CD8-positive, alpha-beta T cell (primary cell): ENCODE measurements at regions of chr7 and their contacts with region 1.

Region 1: GRCh38 chr7:93231799-93232672 is at the start of gene VPS50:
- DNase-seq: peak; percentile 82 to 97 (median 91)
- ATAC-seq: peak; percentile 95
- H3K4me3 ChIP-seq: peak within 1 kb of the TSS; percentile 88 to 92
- H3K4me3 Mint-ChIP-seq: peak within 1 kb of the TSS; percentile 96
- H3K27ac ChIP-seq: peak within 1 kb of the TSS; percentile 89 to 90
- H3K27ac Mint-ChIP-seq: peak within 1 kb of the TSS; percentile 99
- H3K4me1 ChIP-seq: peaks cover 25% of the 10 kb centered on the region
- H3K4me1 Mint-ChIP-seq: peaks cover 19% of the 10 kb centered on the region
- H3K27me3 ChIP-seq: no peaks in the 10 kb centered on the region
- H3K27me3 Mint-ChIP-seq: no peaks in the 10 kb centered on the region
- CTCF ChIP-seq: no peak
- total RNA-seq, gene VPS50: 17.1 to 20.2 TPM

Region 2: DNA sequence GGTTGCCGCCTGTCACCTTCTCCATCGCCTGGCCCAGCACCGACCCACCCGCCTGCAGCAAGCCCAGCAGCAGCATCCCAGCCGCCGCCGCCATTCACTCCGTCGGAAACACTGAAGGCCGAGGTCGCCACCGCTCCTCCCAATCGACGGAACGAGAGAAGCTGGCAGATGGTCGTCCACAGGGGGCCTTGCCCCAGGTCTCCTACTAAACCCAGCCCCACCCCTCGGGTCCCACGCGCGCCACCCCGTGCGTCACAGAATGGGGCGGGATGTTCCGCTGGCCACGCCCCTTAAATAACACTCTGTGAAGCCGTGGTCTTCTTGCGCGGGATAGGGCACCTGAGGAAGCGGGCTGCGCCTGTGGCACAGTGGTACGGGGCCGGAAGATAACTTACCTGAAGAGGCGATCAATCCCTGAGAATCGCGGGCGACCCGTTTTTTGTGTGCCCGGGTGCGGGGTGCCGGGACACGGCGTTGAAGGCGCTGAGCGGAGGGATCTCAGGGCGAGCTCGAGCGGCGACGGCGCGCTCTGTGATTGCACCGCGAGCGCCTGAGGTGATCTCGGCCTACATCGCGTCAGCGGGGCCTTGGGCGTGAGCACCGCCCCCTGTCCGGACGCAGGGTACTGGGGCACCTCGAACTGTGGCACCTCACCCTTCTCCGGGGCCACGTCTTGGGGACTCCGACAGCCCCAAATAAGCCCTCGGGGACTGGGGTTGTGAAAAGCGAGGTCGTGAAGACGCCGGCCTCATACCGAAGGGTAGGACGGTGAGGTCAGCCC is 1097.6 kb before region 1 on chr7 and contains the start of gene CYP51A1:
- CTCF ChIA-PET with region 1: no interaction called
- POLR2A ChIA-PET with region 1: no interaction called
- intact Hi-C with region 1: loop called (anchors 5 kb)
- DNase-seq: peak; percentile 87 to 97 (median 94)
- ATAC-seq: peak; percentile 86
- H3K4me3 ChIP-seq: peak within 1 kb of the TSS; percentile 72 to 94
- H3K4me3 Mint-ChIP-seq: peak within 1 kb of the TSS; percentile 100
- H3K27ac ChIP-seq: peak within 1 kb of the TSS; percentile 88 to 93
- H3K27ac Mint-ChIP-seq: peak within 1 kb of the TSS; percentile 100
- H3K4me1 ChIP-seq: peaks cover 11% of the 10 kb centered on the region
- H3K4me1 Mint-ChIP-seq: peaks cover 32% of the 10 kb centered on the region
- H3K27me3 ChIP-seq: no peaks in the 10 kb centered on the region
- H3K27me3 Mint-ChIP-seq: no peaks in the 10 kb centered on the region
- CTCF ChIP-seq: no peak
- total RNA-seq, gene CYP51A1: 44.3 to 44.4 TPM

Region 3: DNA sequence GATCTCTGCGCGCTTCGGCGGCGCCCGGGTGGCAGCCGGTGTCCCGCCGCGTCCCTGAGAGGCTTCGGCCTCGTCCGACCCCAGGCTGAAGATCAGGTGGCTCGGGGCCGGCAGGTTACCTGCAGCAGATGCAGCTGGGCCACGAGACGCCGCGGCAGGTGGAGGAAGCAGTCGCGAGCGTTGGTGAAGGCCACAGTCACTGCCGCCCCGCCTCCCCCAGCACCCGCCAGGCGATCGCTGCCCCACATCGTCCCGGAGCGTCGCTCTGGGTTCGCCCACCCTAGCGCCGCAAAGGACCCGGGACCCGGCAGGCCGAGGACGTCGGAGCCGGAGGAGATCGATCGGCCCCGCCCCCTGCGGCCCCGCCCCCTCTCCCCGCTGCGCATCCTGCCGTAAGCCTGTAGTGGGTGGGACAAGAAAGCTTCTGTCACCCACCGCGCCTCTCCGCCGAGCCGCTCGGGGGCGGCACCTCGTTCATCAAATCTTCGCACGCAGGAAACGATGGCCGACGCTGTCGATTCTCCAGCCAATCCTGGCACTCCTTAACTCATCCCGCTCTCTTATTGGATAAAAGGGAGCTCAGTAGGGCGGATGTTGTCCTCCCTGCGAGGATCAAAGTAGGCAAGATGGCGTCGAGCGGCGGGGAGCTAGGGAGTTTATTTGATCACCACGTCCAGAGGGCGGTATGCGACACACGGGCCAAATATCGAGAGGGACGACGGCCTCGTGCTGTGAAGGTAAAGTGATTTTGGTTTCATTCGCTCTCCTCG is 703.7 kb before region 1 on chr7 and contains the starts of genes PEX1 and RBM48:
- CTCF ChIA-PET with region 1: no interaction called
- POLR2A ChIA-PET with region 1: interaction called, 8 read pairs
- intact Hi-C with region 1: loop called (anchors 1 to 5 kb)
- DNase-seq: peak; percentile 90 to 99 (median 94)
- ATAC-seq: peak; percentile 89
- H3K4me3 ChIP-seq: peak within 1 kb of the TSS; percentile 94 to 95
- H3K4me3 Mint-ChIP-seq: peak within 1 kb of the TSS; percentile 91
- H3K27ac ChIP-seq: peak within 1 kb of the TSS; percentile 91 to 98
- H3K27ac Mint-ChIP-seq: peak within 1 kb of the TSS; percentile 98
- H3K4me1 ChIP-seq: peaks cover 22% of the 10 kb centered on the region
- H3K4me1 Mint-ChIP-seq: peaks cover 51% of the 10 kb centered on the region
- H3K27me3 ChIP-seq: no peaks in the 10 kb centered on the region
- H3K27me3 Mint-ChIP-seq: no peaks in the 10 kb centered on the region
- CTCF ChIP-seq: no peak
- total RNA-seq, gene PEX1: 17.8 to 18.1 TPM
- total RNA-seq, gene RBM48: 52.7 to 54.6 TPM

Region 4: DNA sequence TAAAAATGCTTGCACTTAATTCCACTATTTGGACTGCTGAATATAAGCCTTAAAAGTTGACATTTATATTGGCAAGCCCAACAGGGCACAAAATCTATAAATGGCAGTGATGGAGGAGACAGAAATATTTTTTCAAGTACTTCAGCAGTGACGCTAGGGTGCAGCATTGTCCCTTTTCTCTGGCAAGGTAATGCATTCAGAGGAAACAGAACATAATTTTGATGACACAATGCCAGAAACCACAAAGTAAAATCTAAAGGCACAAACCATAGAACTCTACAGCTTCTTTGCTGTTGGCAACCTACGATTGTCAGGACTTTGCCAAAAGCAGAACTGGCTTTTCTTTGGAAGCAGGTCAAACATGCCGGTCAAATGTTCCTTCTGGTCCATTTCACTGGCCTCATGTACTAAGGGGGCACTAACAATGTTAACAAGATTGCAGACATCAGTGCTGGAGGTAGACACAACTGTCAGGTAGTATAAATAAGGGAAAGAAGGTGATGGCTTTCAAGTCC is 611.0 kb before region 1 on chr7:
- CTCF ChIA-PET with region 1: no interaction called
- POLR2A ChIA-PET with region 1: no interaction called
- intact Hi-C with region 1: loop called (anchors 5 kb)
- DNase-seq: peak; percentile 53 to 92 (median 77)
- ATAC-seq: peak; percentile 93
- H3K4me3 ChIP-seq: no peak overlapping the region
- H3K4me3 Mint-ChIP-seq: peak overlapping the region; percentile 6
- H3K27ac ChIP-seq: peak overlapping the region in 1 of 2 experiments; percentile 33
- H3K27ac Mint-ChIP-seq: peak overlapping the region; percentile 79
- H3K4me1 ChIP-seq: peaks cover 18% of the 10 kb centered on the region
- H3K4me1 Mint-ChIP-seq: peaks cover 20% of the 10 kb centered on the region
- H3K27me3 ChIP-seq: no peaks in the 10 kb centered on the region
- H3K27me3 Mint-ChIP-seq: no peaks in the 10 kb centered on the region
- CTCF ChIP-seq: peak; percentile 60

Region 5: DNA sequence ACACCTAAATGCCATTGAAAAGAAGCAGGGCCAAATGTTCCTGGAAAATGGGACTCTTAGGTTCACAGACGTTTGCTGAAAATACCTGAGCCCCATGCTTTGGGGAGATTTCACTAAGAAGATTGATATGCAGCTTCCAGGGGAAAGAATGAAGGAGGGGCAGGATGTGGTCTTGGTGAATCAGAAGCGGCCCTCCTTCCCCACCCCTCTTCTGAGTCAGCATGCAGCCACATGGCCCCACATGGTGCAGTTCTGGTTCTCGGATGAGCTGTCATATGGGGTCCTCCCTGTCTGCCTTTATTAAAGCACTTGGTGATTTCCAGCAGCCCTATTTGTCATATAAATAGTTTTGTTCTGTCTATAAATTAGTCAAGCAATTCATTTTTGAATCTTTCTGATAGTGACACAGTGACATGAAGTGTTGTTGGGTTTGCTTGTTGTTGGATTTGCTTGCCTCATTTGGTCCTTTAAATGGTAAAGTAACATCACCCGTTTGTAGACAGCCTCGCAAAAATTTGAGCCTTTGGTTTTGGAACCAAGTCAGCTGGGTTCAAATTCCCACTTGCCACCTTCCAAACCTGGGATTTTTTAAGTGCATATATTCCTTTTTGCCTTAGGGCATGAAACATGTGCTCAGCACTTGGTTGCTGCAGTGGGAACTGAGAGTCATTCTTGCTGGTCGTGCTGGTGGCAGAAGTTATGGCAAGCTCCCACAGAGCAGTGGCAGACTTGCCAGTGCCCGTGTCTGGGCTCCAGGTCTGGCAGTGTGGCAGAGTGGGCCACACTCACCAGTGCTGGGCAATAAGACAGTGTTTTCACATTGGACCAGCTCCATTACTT is 327.5 kb before region 1 on chr7:
- CTCF ChIA-PET with region 1: no interaction called
- POLR2A ChIA-PET with region 1: no interaction called
- intact Hi-C with region 1: loop called in 1 of 2 experiments (anchors 5 kb)
- DNase-seq: peak; percentile 18 to 86 (median 78)
- ATAC-seq: peak; percentile 99
- H3K4me3 ChIP-seq: no peak overlapping the region
- H3K4me3 Mint-ChIP-seq: no peak overlapping the region
- H3K27ac ChIP-seq: peak overlapping the region in 1 of 2 experiments; percentile 3
- H3K27ac Mint-ChIP-seq: no peak overlapping the region
- H3K4me1 ChIP-seq: peaks cover 6% of the 10 kb centered on the region
- H3K4me1 Mint-ChIP-seq: peaks cover 13% of the 10 kb centered on the region
- H3K27me3 ChIP-seq: no peaks in the 10 kb centered on the region
- H3K27me3 Mint-ChIP-seq: no peaks in the 10 kb centered on the region
- CTCF ChIP-seq: no peak

Region 6: GRCh38 chr7:93245525-93246432 is 13.7 kb after region 1 on chr7:
- CTCF ChIA-PET with region 1: interaction called, 10 read pairs
- POLR2A ChIA-PET with region 1: interaction called, 7 read pairs
- intact Hi-C with region 1: loop called in 1 of 2 experiments (anchors 1 kb)
- DNase-seq: peak in 2 of 9 experiments; percentile 42 to 56
- ATAC-seq: peak; percentile 72
- H3K4me3 ChIP-seq: peak overlapping the region in 1 of 2 experiments; percentile 6
- H3K4me3 Mint-ChIP-seq: peak overlapping the region; percentile 72
- H3K27ac ChIP-seq: no peak overlapping the region
- H3K27ac Mint-ChIP-seq: no peak overlapping the region
- H3K4me1 ChIP-seq: no peaks in the 10 kb centered on the region
- H3K4me1 Mint-ChIP-seq: peaks cover 14% of the 10 kb centered on the region
- H3K27me3 ChIP-seq: no peaks in the 10 kb centered on the region
- H3K27me3 Mint-ChIP-seq: no peaks in the 10 kb centered on the region
- CTCF ChIP-seq: peak; percentile 84

Region 7: DNA sequence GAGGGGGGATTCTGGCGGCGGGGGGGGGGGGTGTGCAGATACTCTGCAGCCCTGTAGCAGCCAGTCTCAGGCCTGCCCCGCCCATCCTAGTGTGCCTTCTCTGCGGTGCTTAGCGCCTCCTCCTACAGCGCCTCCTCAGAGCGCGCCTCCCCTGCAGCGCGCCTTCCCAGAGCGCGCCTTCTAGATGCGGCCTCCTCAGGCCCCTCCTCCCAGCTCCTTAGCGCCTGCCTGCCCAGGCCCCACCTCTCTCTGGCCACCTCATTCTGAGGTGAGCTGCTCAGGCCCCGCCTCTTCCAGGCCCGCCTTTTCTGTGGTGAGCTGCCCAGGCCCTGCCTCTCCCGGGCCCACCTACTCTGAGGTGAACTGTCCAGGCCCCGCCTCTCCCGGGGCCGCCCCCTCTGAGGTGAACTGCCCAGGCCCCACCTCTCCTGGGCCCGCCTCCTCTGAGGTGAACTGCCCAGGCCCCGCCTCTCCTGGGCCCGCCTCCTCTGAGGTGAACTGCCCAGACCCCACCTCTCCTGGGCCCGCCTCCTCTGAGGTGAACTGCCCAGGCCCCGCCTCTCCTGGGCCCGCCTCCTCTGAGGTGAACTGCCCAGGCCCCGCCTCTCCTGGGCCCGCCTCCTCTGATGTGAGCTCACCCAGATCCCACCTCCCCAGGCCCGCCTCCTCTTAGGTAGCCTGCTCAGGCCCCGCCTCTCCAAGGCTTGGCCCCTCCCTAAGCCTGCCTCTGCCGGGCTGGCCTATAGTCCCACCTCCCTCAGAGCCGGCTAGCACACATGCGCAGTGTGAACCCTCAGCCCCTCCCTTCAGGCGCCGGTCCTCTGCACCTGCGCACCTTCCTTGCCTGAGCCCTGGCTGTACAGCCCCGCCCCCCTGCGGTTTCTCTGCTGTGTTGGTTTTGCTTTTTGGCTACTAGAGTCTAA is 1426.0 kb after region 1 on chr7:
- CTCF ChIA-PET with region 1: no interaction called
- POLR2A ChIA-PET with region 1: no interaction called
- intact Hi-C with region 1: loop called (anchors 5 to 10 kb)
- DNase-seq: peak; percentile 85 to 97 (median 93)
- ATAC-seq: peak; percentile 81
- H3K4me3 ChIP-seq: peak overlapping the region in 1 of 2 experiments; percentile 51
- H3K4me3 Mint-ChIP-seq: peak overlapping the region; percentile 89
- H3K27ac ChIP-seq: no peak overlapping the region
- H3K27ac Mint-ChIP-seq: no peak overlapping the region
- H3K4me1 ChIP-seq: peaks cover 29% of the 10 kb centered on the region
- H3K4me1 Mint-ChIP-seq: peaks cover 28% of the 10 kb centered on the region
- H3K27me3 ChIP-seq: peaks cover 18 to 19% of the 10 kb centered on the region in 2 experiments
- H3K27me3 Mint-ChIP-seq: peaks cover 18% of the 10 kb centered on the region
- CTCF ChIP-seq: no peak